ENCODE measurements at regions of chr11 and their contacts with region 1.

Region 1: DNA sequence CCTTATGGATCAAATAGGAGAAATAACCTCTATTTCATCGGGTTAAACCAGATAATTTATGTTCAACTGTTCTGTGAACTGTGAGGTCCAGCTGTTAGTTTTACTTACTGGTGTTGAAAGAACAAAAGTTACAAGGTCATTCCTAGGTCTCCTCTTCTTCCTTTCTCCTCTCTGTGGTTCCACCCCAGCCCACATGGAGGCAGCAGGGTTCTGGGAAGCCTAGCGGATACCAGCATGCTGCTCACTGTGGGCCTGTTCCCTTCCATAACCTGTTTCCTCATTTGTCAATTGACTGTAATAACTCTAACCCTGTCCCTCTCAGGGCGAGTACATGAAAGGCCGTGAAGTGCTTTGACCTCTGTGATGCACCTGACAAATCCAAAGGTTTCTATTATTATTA is 27.8 kb downstream of the RELT start:
- DNase-seq: no peak
- ATAC-seq: no peak
- H3K4me3 Mint-ChIP-seq: no peak overlapping the region
- H3K27ac Mint-ChIP-seq: no peak overlapping the region
- H3K4me1 Mint-ChIP-seq: peaks cover 4% of the 10 kb centered on the region
- H3K27me3 Mint-ChIP-seq: no peaks in the 10 kb centered on the region
- CTCF ChIP-seq: no peak

Region 2: GRCh38 chr11:73458201-73458600 is 54.2 kb after region 1 on chr11:
- CTCF ChIA-PET with region 1: no interaction called
- POLR2A ChIA-PET with region 1: interaction called, 11 read pairs
- intact Hi-C with region 1: no loop called
- DNase-seq: no peak
- ATAC-seq: no peak
- H3K4me3 Mint-ChIP-seq: no peak overlapping the region
- H3K27ac Mint-ChIP-seq: no peak overlapping the region
- H3K4me1 Mint-ChIP-seq: peaks cover 17% of the 10 kb centered on the region
- H3K27me3 Mint-ChIP-seq: no peaks in the 10 kb centered on the region
- CTCF ChIP-seq: no peak

Measured in activated B cell treated with CpG ODN at 0.5 μM for 24 hours (primary cell).